Activated CD4-positive, alpha-beta T cell treated with anti-CD3 and anti-CD28 coated beads, Interleukin-2, amount 10 ng/mL, durations not matched to agents 24 days and 14 days (primary cell): ENCODE measurements at regions of chr20 and their contacts with region 1.

Region 1: DNA sequence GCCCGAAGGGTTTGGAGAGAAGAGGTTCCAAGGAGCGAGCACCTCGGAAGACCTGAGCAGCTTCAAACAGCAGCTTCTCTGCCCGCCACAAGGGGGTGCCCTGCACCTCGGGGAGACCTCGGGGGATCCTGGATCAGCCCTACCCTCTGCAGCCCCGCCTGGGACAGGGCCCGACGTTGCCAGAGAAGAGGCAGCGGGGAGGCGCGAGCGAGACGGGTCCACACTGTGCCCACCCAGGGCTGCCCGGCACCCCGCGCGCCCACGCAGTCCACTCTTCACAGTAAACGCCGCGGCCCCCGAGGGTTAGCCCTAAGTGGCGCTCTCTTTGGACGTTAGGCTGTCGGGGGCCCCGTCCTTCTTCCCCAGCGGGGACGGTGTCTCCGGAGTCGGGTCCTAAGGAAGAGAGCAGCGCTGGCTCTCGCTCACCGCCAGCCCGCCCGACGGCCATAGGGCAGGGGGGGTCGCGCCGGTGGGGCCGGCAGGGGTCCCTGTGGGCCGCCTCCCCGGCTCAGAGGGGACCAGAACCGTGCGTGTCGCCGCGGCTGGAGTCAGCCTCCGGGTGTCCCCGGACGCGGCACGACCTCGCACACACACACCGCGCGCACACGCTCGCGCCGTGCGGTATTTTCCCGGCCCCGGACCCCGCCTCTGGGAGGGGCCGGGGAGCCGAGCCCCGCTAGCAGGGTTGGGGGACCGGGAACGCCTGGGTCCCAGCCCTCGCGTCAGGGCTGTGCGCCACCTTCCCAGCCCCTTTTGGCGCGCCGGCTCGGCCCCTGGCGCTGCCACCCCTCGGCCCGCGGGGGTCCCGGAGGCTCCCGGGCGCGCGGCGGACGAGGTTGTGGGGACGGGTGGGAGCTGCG is 929 bp downstream of the CDH22 start:
- DNase-seq: peak; percentile 90
- H3K4me3 Mint-ChIP-seq: no peak overlapping the region
- H3K27ac Mint-ChIP-seq: no peak overlapping the region
- H3K4me1 Mint-ChIP-seq: peaks cover 4% of the 10 kb centered on the region
- H3K27me3 Mint-ChIP-seq: peaks cover 75% of the 10 kb centered on the region

Region 2: GRCh38 chr20:46293084-46293483 is 14.3 kb before region 1 on chr20:
- intact Hi-C with region 1: no loop called
- DNase-seq: peak; percentile 59
- H3K4me3 Mint-ChIP-seq: no peak overlapping the region
- H3K27ac Mint-ChIP-seq: no peak overlapping the region
- H3K4me1 Mint-ChIP-seq: no peaks in the 10 kb centered on the region
- H3K27me3 Mint-ChIP-seq: peaks cover 22% of the 10 kb centered on the region

Region 3: GRCh38 chr20:46349035-46349741 is 41.8 kb after region 1 on chr20:
- intact Hi-C with region 1: loop called (anchors 2 kb)
- DNase-seq: peak; percentile 85
- H3K4me3 Mint-ChIP-seq: no peak overlapping the region
- H3K27ac Mint-ChIP-seq: no peak overlapping the region
- H3K4me1 Mint-ChIP-seq: peaks cover 7% of the 10 kb centered on the region
- H3K27me3 Mint-ChIP-seq: peaks cover 6% of the 10 kb centered on the region

Region 4: GRCh38 chr20:46411637-46412036 is 104.3 kb after region 1 on chr20:
- intact Hi-C with region 1: loop called (anchors 1 kb)
- DNase-seq: no peak
- H3K4me3 Mint-ChIP-seq: no peak overlapping the region
- H3K27ac Mint-ChIP-seq: no peak overlapping the region
- H3K4me1 Mint-ChIP-seq: peaks cover 26% of the 10 kb centered on the region
- H3K27me3 Mint-ChIP-seq: peaks cover 27% of the 10 kb centered on the region

Region 5: GRCh38 chr20:46423882-46424482 is 116.6 kb after region 1 on chr20:
- intact Hi-C with region 1: no loop called
- DNase-seq: peak; percentile 40
- H3K4me3 Mint-ChIP-seq: no peak overlapping the region
- H3K27ac Mint-ChIP-seq: no peak overlapping the region
- H3K4me1 Mint-ChIP-seq: no peaks in the 10 kb centered on the region
- H3K27me3 Mint-ChIP-seq: peaks cover 46% of the 10 kb centered on the region